Endothelial cell of umbilical vein (primary cell): ENCODE measurements at regions of chr10 and their contacts with region 1.

Region 1: DNA sequence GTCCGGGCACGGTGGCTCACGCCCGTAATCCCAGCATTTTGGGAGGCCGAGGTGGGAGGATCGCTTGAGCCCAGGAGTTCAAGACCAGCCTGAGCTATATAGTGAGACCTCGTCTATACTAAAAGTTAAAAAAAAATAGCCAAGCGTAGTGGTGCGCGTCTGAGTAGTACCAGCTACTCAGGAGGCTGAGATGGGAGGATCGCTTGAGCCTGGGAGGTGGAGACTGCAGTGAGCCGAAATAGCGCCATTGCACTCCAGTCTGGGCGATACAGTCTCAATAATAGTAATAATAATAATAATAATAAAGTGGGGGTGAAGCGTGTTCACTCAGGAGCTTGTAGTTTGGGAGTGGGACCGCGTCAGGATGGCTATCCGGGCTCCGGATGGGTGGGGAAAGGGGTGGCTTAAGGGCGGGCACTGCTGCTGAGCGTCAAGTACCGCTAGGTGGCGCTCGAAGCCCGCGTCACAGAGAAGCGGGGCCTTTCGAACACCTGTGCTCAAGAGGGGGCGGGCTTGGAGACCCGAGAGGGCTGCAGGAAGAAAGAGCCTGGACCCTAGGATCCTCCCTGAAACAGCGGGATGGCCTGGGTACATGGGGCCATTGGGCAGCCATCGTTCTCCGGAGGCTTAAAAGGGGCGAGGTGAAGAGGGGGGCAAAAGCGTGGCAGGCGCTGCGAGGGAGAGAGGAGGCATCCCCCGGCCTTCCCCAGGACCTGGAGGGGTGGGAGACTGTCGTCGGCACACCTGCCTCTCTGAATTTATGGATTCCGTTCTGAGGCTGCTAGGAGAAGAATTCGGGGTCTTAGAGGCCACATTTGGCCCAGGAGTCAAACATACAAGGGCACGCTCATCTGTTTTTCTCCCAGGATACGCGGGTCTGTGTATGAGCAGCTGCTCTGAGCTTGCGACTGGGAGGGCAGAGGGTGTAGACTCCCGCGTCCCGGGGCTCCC is 14.5 kb downstream of the LBX1 start:
- DNase-seq: peak; percentile 44
- H3K4me3 ChIP-seq: no peak overlapping the region
- H3K27ac ChIP-seq: no peak overlapping the region
- H3K4me1 ChIP-seq: no peaks in the 10 kb centered on the region
- H3K27me3 ChIP-seq: peaks cover 68 to 71% of the 10 kb centered on the region in 2 experiments
- CTCF ChIP-seq: peak; percentile 85 to 94
- POLR2A ChIP-seq: no peak

Region 2: GRCh38 chr10:101195921-101196320 is 18.8 kb before region 1 on chr10:
- CTCF ChIA-PET with region 1: interaction called, 10 read pairs
- POLR2A ChIA-PET with region 1: no interaction called
- dilution Hi-C with region 1: no loop called
- intact Hi-C with region 1: no loop called
- DNase-seq: no peak
- H3K4me3 ChIP-seq: no peak overlapping the region
- H3K27ac ChIP-seq: no peak overlapping the region
- H3K4me1 ChIP-seq: peaks cover 3% of the 10 kb centered on the region
- H3K27me3 ChIP-seq: peaks cover 13% of the 10 kb centered on the region in 2 experiments
- CTCF ChIP-seq: no peak
- POLR2A ChIP-seq: no peak

Region 3: DNA sequence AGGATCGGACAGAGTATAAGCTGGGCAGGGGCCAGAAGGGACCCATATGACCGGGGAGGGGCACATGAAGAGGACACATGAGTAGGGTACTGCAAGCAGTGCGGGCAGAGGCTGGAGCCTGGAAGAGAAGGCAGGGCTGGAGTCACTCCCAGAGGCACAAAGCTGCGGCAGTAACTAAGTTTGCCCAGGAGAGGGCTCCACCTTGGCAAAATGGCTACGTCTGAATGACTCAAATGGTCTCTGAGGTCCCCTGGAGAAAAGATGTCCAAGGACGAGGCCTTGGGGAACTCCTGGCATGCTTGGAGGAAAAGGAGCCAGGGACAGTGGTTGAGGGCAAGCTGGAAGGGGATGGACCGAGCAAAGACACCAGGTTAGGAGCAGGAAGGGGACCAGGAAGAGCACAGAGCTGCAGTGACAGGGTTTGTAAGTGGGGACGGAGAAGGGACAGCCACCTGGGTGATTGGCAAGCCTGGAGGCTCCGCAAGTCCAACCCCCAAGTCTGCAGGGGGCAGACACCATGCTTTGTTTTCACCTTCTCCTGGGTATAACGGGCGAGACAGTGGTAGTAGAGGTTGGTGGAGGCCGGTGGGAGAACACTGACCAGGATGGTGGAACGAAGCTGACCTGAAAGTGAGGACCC is 57.6 kb after region 1 on chr10:
- CTCF ChIA-PET with region 1: interaction called, 10 read pairs
- POLR2A ChIA-PET with region 1: no interaction called
- dilution Hi-C with region 1: no loop called
- intact Hi-C with region 1: no loop called
- DNase-seq: peak; percentile 70
- H3K4me3 ChIP-seq: no peak overlapping the region
- H3K27ac ChIP-seq: no peak overlapping the region
- H3K4me1 ChIP-seq: no peaks in the 10 kb centered on the region
- H3K27me3 ChIP-seq: peaks cover 3 to 8% of the 10 kb centered on the region in 2 experiments
- CTCF ChIP-seq: peak; percentile 77 to 89
- POLR2A ChIP-seq: no peak

Region 4: GRCh38 chr10:101291331-101292193 is 76.8 kb after region 1 on chr10:
- CTCF ChIA-PET with region 1: interaction called, 52 read pairs
- POLR2A ChIA-PET with region 1: interaction called, 4 read pairs
- dilution Hi-C with region 1: no loop called
- intact Hi-C with region 1: loop called (anchors 1 kb)
- DNase-seq: peak; percentile 33
- H3K4me3 ChIP-seq: peak overlapping the region in 2 of 3 experiments; percentile 32 to 46
- H3K27ac ChIP-seq: no peak overlapping the region
- H3K4me1 ChIP-seq: peaks cover 2% of the 10 kb centered on the region
- H3K27me3 ChIP-seq: peaks cover 54 to 56% of the 10 kb centered on the region in 2 experiments
- CTCF ChIP-seq: peak; percentile 61 to 90
- POLR2A ChIP-seq: no peak

Region 5: GRCh38 chr10:101569838-101570766 is 355.4 kb after region 1 on chr10:
- CTCF ChIA-PET with region 1: interaction called, 78 read pairs
- POLR2A ChIA-PET with region 1: no interaction called
- dilution Hi-C with region 1: no loop called
- intact Hi-C with region 1: loop called (anchors 1 kb)
- DNase-seq: peak; percentile 62
- H3K4me3 ChIP-seq: peak overlapping the region in 2 of 3 experiments; percentile 18 to 39
- H3K27ac ChIP-seq: no peak overlapping the region
- H3K4me1 ChIP-seq: peaks cover 7% of the 10 kb centered on the region
- H3K27me3 ChIP-seq: peaks cover 26 to 27% of the 10 kb centered on the region in 2 experiments
- CTCF ChIP-seq: peak; percentile 46 to 90
- POLR2A ChIP-seq: no peak

Region 6: GRCh38 chr10:101774589-101775272 is 560.0 kb after region 1 on chr10:
- CTCF ChIA-PET with region 1: interaction called, 10 read pairs
- POLR2A ChIA-PET with region 1: no interaction called
- dilution Hi-C with region 1: no loop called
- intact Hi-C with region 1: no loop called
- DNase-seq: no peak
- H3K4me3 ChIP-seq: no peak overlapping the region
- H3K27ac ChIP-seq: no peak overlapping the region
- H3K4me1 ChIP-seq: peaks cover 10% of the 10 kb centered on the region
- H3K27me3 ChIP-seq: peaks cover 58 to 75% of the 10 kb centered on the region in 2 experiments
- CTCF ChIP-seq: no peak
- POLR2A ChIP-seq: no peak